H1 (cell line): ENCODE measurements at regions of chr1 and their contacts with region 1.

Region 1: DNA sequence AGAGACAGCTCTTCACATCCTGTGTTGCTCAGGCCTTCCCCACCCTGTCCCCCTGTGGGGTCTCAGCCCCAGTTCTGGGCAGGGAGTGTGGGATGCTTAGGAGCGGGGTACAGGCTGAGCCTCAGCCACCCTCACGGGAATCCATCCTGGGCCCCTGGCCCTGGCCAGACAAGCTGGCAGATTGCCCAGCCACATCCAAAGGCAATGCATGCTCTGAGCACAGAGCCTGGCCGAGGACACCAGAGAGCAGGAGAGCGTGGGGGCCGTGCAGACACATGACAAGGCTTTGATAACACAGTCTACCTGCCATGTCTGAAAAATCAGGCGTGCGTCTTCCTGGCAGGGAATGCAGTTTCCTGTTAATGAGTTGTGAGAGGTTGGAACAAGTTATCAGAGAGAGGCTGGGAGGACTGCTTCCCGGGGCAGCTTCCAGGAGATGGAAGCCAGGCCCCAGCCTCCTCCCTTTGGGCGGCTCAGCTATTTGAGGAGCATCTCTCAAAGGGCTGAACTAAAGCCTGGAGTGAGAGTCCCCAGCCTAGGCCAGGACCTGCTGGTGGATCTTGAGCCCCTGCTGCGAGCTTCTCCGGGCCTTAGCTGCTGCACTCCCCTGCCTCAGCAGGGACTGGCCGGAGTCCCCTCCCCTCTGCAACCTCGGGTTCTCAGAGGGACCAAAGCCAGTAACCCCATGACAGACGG is 72.2 kb upstream of the SELENON start:
- DNase-seq: peak in 1 of 2 experiments; percentile 50
- H3K4me3 ChIP-seq: no peak overlapping the region
- H3K27ac ChIP-seq: no peak overlapping the region
- H3K4me1 ChIP-seq: peaks cover 9 to 25% (median 17%) of the 10 kb centered on the region in 4 experiments
- H3K27me3 ChIP-seq: no peaks in the 10 kb centered on the region
- CTCF ChIP-seq: no peak
- EP300 ChIP-seq: no peak
- POLR2A ChIP-seq: no peak
- RAD21 ChIP-seq: no peak

Region 2: GRCh38 chr1:25704267-25704691 is 23.5 kb before region 1 on chr1:
- CTCF ChIA-PET with region 1: interaction called, 11 read pairs
- POLR2A ChIA-PET with region 1: interaction called, 13 read pairs
- DNase-seq: no peak
- H3K4me3 ChIP-seq: no peak overlapping the region
- H3K27ac ChIP-seq: no peak overlapping the region
- H3K4me1 ChIP-seq: peaks cover 37 to 49% (median 44%) of the 10 kb centered on the region in 4 experiments
- H3K27me3 ChIP-seq: no peaks in the 10 kb centered on the region
- CTCF ChIP-seq: no peak
- EP300 ChIP-seq: no peak
- POLR2A ChIP-seq: no peak
- RAD21 ChIP-seq: no peak

Region 3: DNA sequence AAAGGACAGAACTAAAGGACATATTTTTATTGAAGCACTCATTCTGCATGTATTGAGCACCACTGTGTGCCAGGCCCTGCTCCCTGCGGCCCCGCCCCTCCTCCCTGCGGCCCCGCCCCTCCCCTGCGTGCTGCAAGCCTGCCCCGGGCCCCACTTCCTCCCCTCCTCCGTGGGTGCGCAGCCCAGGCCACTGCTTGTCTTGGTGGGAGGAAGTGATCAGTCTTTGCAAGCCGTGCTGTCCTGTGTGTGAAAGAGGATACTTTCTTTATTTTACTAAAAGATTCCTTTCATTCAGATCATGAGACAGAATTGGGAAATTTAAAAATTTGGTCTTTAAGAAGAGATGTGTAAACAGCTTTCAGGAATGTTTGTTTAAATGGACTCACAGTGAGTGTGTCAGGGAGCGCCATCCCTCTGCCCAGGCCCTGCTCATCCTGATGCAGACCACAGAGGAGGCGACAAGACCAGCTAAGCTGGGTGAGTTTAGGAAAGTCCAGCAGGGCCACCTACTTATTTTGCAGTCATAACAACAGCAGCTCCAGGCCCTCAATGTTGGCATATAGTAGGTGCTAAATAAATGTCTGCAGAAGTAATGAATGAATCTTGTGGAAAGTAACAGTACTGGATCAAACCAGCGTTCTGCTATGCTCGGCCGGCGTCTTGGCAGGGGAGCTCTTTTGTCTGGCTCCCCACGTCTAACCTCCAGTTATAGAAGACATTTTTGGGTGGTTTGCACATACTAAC is 16.1 kb before region 1 on chr1:
- CTCF ChIA-PET with region 1: interaction called, 37 read pairs
- POLR2A ChIA-PET with region 1: interaction called, 13 read pairs
- DNase-seq: no peak
- H3K4me3 ChIP-seq: no peak overlapping the region
- H3K27ac ChIP-seq: no peak overlapping the region
- H3K4me1 ChIP-seq: peaks cover 15 to 22% (median 19%) of the 10 kb centered on the region in 4 experiments
- H3K27me3 ChIP-seq: no peaks in the 10 kb centered on the region
- CTCF ChIP-seq: no peak
- EP300 ChIP-seq: no peak
- POLR2A ChIP-seq: no peak
- RAD21 ChIP-seq: no peak

Region 4: GRCh38 chr1:25748531-25749205 is 20.9 kb after region 1 on chr1:
- CTCF ChIA-PET with region 1: interaction called, 10 read pairs
- POLR2A ChIA-PET with region 1: interaction called, 3 read pairs
- DNase-seq: no peak
- H3K4me3 ChIP-seq: no peak overlapping the region
- H3K27ac ChIP-seq: peak overlapping the region; percentile 31; the same call in 1 of the 2 replicates
- H3K4me1 ChIP-seq: peaks cover 12 to 30% (median 17%) of the 10 kb centered on the region in 4 experiments
- H3K27me3 ChIP-seq: no peaks in the 10 kb centered on the region
- CTCF ChIP-seq: no peak
- EP300 ChIP-seq: no peak
- POLR2A ChIP-seq: no peak
- RAD21 ChIP-seq: no peak

Region 5: GRCh38 chr1:25758466-25759077 is 30.8 kb after region 1 on chr1:
- CTCF ChIA-PET with region 1: interaction called, 25 read pairs
- POLR2A ChIA-PET with region 1: no interaction called
- DNase-seq: no peak
- H3K4me3 ChIP-seq: no peak overlapping the region
- H3K27ac ChIP-seq: no peak overlapping the region
- H3K4me1 ChIP-seq: peaks cover 0 to 16% (median 7%) of the 10 kb centered on the region in 4 experiments; a peak in 5 of 7 replicates
- H3K27me3 ChIP-seq: no peaks in the 10 kb centered on the region
- CTCF ChIP-seq: peak in 1 of 3 experiments; percentile 24; a peak in 1 of 4 replicates
- EP300 ChIP-seq: no peak
- POLR2A ChIP-seq: no peak
- RAD21 ChIP-seq: no peak; a peak in 1 of 4 replicates

Region 6: DNA sequence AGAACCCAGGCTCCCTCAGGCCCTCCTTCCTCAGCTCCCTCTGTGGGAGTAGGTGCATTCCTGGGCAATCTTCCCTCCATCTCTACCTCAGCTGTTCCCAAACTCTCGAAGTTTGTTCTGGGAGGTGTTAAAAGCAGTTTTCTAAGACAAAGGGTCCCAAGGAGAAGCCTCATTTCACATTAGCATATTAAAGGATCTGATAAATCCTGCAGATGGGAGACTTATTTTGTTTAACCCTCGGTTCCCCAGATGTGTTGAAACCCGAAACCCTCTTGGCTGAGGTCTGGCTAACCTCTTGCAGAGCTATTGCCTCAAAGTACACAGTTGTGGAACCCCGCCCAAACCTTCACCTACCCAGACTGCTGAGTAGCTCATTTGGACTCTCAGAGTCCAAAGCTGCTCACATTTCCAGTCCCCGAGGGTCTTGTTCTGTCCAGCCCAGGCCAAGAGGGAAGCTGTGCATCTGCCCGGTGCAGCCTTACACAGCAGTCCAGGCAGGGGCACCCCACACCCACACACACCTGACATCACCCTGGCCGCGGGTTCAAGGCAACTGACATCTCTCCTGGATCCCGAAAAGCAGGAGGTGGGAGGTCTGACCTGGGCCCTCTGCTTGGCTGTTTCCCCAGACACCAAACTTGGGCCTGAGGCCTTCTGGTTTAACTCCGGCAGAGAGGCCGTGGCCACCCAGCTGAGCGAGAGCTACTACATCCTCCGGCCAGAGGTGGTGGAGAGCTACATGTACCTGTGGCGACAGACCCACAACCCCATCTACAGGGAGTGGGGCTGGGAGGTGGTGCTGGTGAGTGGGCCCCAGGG is 52.7 kb after region 1 on chr1:
- CTCF ChIA-PET with region 1: interaction called, 13 read pairs
- POLR2A ChIA-PET with region 1: no interaction called
- DNase-seq: peak in 1 of 2 experiments; percentile 25
- H3K4me3 ChIP-seq: peak overlapping the region in 3 of 4 experiments; percentile 0 to 26 (median 6); a peak in 2 of 8 replicates
- H3K27ac ChIP-seq: no peak overlapping the region
- H3K4me1 ChIP-seq: peaks cover 6 to 24% (median 21%) of the 10 kb centered on the region in 4 experiments
- H3K27me3 ChIP-seq: no peaks in the 10 kb centered on the region; a peak in 1 of 7 replicates
- CTCF ChIP-seq: no peak
- EP300 ChIP-seq: no peak
- POLR2A ChIP-seq: no peak
- RAD21 ChIP-seq: 0 out of 4 replicates have a peak, but pooled peaks of 1 of the 2 experiments have one; percentile 2

Region 7: GRCh38 chr1:25874934-25875855 is 147.4 kb after region 1 on chr1 and contains the start of gene PAQR7:
- CTCF ChIA-PET with region 1: no interaction called
- POLR2A ChIA-PET with region 1: no interaction called
- DNase-seq: peak in 1 of 2 experiments; percentile 86
- H3K4me3 ChIP-seq: peak within 1 kb of the TSS; percentile 26 to 69 (median 48)
- H3K27ac ChIP-seq: 0 out of 2 replicates have a peak within 1 kb of the TSS, but pooled peaks have one; percentile 8
- H3K4me1 ChIP-seq: peaks cover 0 to 13% (median 11%) of the 10 kb centered on the region in 4 experiments; a peak in 5 of 7 replicates
- H3K27me3 ChIP-seq: peaks cover 0 to 3% (median 1%) of the 10 kb centered on the region in 4 experiments; a peak in 4 of 7 replicates
- CTCF ChIP-seq: peak in 1 of 3 experiments; percentile 4; a peak in 1 of 4 replicates
- EP300 ChIP-seq: no peak
- POLR2A ChIP-seq: peak in 1 of 2 experiments; percentile 48; a peak in 1 of 3 replicates
- RAD21 ChIP-seq: no peak
- total RNA-seq, gene PAQR7: 7.3 and 7.7 TPM in 2 replicates